KBM-7 (cell line): ENCODE measurements at regions of chr1 and their contacts with region 1.

Region 1: DNA sequence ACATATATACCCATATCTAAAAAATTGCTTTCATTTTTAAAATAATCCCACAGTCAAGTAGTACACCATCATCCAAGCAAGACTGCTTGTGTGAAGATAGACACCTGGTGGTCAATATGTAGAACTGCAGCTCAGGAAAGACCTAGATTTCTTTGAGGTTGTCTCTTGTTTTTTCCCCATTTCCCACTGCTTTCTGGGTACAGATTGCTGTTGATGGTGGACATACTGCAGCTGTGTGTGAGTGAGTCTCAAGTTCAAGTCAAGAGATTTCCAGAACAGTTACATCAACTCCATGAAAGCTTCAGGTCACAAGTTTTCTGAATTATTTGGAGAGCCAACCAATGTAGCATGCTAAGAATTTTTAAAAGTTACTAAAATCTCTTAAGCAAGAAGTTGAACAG is 306.4 kb downstream of the DUSP10 start:
- DNase-seq: peak; percentile 71

Region 2: GRCh38 chr1:220810179-220810653 is 625.3 kb before region 1 on chr1:
- in situ Hi-C with region 1: loop called (anchors 25 kb)
- DNase-seq: peak; percentile 72

Region 3: GRCh38 chr1:221839321-221839720 is 403.8 kb after region 1 on chr1:
- in situ Hi-C with region 1: no loop called
- DNase-seq: no peak